ENCODE measurements at regions of chr5 and their contacts with region 1.

Region 1: GRCh38 chr5:127492854-127493738 is 24.3 kb upstream of the PRRC1 start:
- DNase-seq: no peak
- H3K4me3 Mint-ChIP-seq: no peak overlapping the region
- H3K27ac Mint-ChIP-seq: no peak overlapping the region
- H3K4me1 Mint-ChIP-seq: no peaks in the 10 kb centered on the region
- H3K27me3 Mint-ChIP-seq: peaks cover 16% of the 10 kb centered on the region

Region 2: GRCh38 chr5:126656396-126657007 is 836.6 kb before region 1 on chr5:
- CTCF ChIA-PET with region 1: interaction called, 13 read pairs
- DNase-seq: peak; percentile 45
- H3K4me3 Mint-ChIP-seq: no peak overlapping the region
- H3K27ac Mint-ChIP-seq: no peak overlapping the region
- H3K4me1 Mint-ChIP-seq: peaks cover 7% of the 10 kb centered on the region
- H3K27me3 Mint-ChIP-seq: peaks cover 8% of the 10 kb centered on the region

Region 3: DNA sequence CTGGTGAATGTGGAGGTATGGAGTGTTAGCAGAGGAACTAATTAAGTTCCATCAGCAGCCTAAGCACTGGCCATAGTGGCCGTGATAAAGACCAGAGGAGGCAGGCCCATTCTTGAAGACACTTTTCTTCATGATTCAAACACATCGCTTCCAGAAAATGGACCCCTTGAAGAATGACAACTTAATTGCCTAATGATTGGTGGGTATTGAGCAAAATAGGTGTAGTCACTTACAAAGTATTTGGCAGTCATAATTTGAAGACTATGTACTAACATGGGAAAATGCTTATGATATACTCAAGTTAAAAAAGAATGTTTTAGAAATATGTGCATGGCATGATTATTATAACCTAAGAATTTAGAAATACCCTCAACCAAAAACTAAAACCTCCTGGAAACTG is 157.7 kb before region 1 on chr5:
- CTCF ChIA-PET with region 1: no interaction called
- DNase-seq: no peak
- H3K4me3 Mint-ChIP-seq: no peak overlapping the region
- H3K27ac Mint-ChIP-seq: no peak overlapping the region
- H3K4me1 Mint-ChIP-seq: no peaks in the 10 kb centered on the region
- H3K27me3 Mint-ChIP-seq: peaks cover 5% of the 10 kb centered on the region

Region 4: DNA sequence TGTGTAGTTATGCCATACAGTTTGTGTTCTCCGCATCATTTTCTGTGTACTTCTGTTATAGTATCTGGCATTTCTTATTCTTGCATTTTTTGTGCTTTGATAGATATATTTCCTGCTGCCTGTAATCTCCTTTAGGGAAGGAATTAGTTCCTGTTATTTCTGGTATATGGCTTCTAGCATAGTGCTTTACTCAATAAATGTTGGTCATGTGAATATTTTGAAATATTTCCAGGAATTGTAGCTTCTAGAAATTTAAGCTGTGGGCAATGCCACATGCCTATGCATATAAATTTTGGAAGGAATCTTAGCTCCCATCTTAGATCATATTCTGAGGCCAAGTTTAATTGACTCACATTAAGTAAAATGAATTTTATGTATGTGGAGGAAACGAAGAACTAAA is 12.8 kb after region 1 on chr5:
- CTCF ChIA-PET with region 1: interaction called, 10 read pairs
- DNase-seq: no peak
- H3K4me3 Mint-ChIP-seq: no peak overlapping the region
- H3K27ac Mint-ChIP-seq: no peak overlapping the region
- H3K4me1 Mint-ChIP-seq: no peaks in the 10 kb centered on the region
- H3K27me3 Mint-ChIP-seq: peaks cover 4% of the 10 kb centered on the region

Measured in activated naive CD4-positive, alpha-beta T cell treated with anti-CD3 and anti-CD28 coated beads, Interleukin-2, amount 10 ng/mL, durations not matched to agents 7 days and 5 days (primary cell).